Calu3 (cell line): ENCODE measurements at regions of chr15 and their contacts with region 1.

Region 1: DNA sequence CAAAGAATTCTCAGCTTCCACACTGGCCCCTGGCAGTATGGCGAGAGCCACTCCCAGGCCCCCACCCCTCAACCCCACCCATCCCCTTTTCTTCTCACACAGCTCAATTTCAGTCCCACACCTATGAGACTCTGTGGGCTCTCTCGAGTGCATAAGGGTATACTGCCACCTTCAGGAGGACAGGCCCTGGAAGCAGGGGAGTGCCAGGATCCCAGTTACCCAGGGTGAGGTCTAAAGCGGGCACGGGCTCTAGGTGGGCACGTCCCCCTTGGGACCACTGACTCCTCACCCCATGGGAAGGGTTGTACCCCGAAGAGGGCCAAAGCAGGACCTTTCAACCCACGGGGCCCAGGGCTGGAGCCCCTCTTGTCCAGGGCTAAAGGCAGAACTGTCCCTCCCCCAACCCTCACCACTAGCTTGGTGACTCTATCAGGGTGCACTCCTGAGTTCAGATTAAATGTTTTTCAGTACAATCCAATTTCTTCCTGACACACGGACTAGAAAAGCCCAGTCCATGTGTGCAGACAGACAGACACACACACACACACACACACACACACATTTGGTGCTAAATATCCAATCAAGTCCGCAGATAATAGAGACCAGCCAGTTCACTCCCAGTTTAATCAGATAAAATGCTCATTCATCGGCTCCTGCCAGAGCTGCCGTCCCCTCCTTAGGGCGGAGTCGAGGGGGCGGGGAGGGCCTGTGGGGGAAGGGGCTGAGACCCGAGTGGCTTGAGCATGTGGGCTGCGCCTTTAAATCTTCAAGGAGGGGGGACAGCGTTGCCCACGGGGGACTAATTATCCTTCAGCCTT is 59.4 kb downstream of the CYP11A1 start:
- DNase-seq: peak; percentile 81
- H3K4me3 Mint-ChIP-seq: no peak overlapping the region
- H3K27ac Mint-ChIP-seq: no peak overlapping the region
- H3K4me1 Mint-ChIP-seq: peaks cover 9% of the 10 kb centered on the region
- H3K27me3 Mint-ChIP-seq: peaks cover 100% of the 10 kb centered on the region
- CTCF ChIP-seq: peak; percentile 71

Region 2: DNA sequence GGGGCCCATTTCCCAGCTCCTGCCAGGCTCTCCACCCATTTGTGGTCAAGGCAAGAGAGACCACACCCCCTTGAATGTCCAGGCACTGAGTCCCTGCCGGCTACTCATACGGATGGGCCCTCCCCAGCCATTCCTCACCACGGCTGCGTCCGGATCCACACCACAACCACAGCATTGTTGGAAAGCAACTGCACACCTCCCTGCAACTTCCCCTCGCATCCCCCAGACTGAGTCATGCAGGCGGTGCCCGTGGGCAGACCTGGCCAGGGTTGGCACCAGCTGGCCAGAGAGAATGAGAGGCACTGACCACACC is 351.3 kb before region 1 on chr15:
- CTCF ChIA-PET with region 1: interaction called, 10 read pairs
- intact Hi-C with region 1: no loop called
- DNase-seq: peak; percentile 93
- H3K4me3 Mint-ChIP-seq: peak overlapping the region; percentile 37
- H3K27ac Mint-ChIP-seq: peak overlapping the region; percentile 84
- H3K4me1 Mint-ChIP-seq: peaks cover 41% of the 10 kb centered on the region
- H3K27me3 Mint-ChIP-seq: no peaks in the 10 kb centered on the region
- CTCF ChIP-seq: no peak

Region 3: DNA sequence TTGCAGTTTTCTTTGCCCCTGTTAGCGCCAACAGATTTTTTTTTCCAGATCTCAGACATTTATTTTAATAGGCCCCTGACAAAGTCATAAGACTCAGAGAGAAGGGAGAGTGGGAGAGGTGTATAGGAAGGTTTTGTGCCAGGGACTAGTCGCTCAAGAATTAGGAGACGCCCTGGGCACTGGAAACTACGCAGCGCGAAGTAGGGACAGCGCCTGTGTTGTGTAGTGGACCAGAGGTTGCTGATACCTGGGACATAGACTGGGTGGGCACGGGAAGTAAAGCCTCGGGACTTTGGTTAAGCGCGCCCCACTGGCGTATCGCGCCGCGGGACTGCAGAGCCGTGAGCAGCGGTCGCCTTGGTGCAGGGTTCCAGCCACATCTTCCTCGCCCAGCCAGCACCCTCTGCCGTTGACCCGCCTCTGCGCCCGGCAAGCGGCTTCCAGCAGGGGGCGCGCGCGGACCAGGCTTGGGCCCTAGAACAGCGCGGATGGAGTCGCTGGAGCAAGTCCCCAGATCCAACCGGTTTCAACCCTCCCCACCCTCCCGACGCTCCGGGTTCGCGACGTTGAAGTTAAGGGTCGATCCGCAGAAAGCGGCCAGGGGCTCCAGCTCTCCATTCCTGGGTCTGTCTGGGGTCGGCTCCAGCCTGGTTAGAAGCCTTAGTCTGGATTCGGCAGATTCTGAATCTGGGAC is 180.6 kb before region 1 on chr15:
- CTCF ChIA-PET with region 1: interaction called, 29 read pairs
- intact Hi-C with region 1: loop called (anchors 1 kb)
- DNase-seq: peak; percentile 97
- H3K4me3 Mint-ChIP-seq: no peak overlapping the region
- H3K27ac Mint-ChIP-seq: no peak overlapping the region
- H3K4me1 Mint-ChIP-seq: no peaks in the 10 kb centered on the region
- H3K27me3 Mint-ChIP-seq: peaks cover 91% of the 10 kb centered on the region
- CTCF ChIP-seq: peak; percentile 98

Region 4: GRCh38 chr15:74196179-74196590 is 111.9 kb before region 1 on chr15:
- CTCF ChIA-PET with region 1: interaction called, 14 read pairs
- intact Hi-C with region 1: no loop called
- DNase-seq: peak; percentile 87
- H3K4me3 Mint-ChIP-seq: no peak overlapping the region
- H3K27ac Mint-ChIP-seq: no peak overlapping the region
- H3K4me1 Mint-ChIP-seq: peaks cover 66% of the 10 kb centered on the region
- H3K27me3 Mint-ChIP-seq: no peaks in the 10 kb centered on the region
- CTCF ChIP-seq: no peak

Region 5: GRCh38 chr15:74240002-74240568 is 68.0 kb before region 1 on chr15:
- CTCF ChIA-PET with region 1: interaction called, 31 read pairs
- intact Hi-C with region 1: no loop called
- DNase-seq: peak; percentile 97
- H3K4me3 Mint-ChIP-seq: no peak overlapping the region
- H3K27ac Mint-ChIP-seq: peak overlapping the region; percentile 57
- H3K4me1 Mint-ChIP-seq: peaks cover 76% of the 10 kb centered on the region
- H3K27me3 Mint-ChIP-seq: no peaks in the 10 kb centered on the region
- CTCF ChIP-seq: peak; percentile 66